AG04450 (cell line): ENCODE measurements at regions of chr1 and their contacts with region 1.

Region 1: DNA sequence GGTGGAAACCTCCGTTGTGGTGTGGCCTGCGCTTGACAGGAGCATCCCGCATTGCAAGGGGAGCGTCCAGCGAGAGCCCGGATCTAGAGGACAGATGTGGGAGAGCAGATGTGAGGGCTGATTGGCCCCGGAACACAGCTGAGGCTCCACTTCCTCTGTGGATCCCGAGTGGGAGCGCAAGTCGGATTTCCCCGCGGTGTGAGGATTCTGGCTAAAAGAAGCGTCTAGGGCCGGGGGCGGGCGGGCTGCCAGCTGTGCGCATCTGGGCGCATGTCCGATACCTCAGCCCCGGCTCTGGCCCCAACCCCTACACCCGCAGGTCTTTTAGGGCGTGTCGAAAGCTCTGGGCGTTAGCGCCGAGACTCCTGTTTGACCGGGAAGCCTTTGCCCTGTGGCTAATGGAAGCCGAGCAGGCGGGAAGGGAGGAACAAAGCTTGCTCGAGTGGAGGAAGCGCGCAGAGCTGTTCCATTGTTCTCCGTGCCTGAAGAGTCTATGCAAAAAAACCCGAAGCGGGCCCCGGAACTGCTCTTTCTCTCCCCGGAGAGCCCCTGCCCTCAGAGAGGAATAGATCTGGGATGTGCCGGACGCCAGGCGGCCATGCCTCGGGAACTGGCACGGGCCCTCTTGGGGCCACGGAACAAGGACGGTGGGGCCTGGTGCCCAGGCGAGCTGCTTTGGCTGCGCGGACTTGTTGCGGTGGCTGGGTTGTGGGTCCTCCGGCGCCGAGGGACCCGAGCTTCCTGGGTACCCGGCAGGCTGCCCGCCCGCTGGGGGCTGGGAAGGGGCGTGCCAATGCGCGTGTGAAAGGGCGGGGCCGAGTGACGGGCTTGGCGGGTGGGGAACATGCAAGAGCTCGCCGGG is 111.1 kb downstream of the NAV1 start:
- DNase-seq: no peak
- H3K4me3 ChIP-seq: peak overlapping the region; percentile 91
- H3K27ac ChIP-seq: peak overlapping the region; percentile 73
- H3K27me3 ChIP-seq: no peaks in the 10 kb centered on the region
- CTCF ChIP-seq: peak; percentile 21; the same call in 1 of the 2 replicates

Region 2: DNA sequence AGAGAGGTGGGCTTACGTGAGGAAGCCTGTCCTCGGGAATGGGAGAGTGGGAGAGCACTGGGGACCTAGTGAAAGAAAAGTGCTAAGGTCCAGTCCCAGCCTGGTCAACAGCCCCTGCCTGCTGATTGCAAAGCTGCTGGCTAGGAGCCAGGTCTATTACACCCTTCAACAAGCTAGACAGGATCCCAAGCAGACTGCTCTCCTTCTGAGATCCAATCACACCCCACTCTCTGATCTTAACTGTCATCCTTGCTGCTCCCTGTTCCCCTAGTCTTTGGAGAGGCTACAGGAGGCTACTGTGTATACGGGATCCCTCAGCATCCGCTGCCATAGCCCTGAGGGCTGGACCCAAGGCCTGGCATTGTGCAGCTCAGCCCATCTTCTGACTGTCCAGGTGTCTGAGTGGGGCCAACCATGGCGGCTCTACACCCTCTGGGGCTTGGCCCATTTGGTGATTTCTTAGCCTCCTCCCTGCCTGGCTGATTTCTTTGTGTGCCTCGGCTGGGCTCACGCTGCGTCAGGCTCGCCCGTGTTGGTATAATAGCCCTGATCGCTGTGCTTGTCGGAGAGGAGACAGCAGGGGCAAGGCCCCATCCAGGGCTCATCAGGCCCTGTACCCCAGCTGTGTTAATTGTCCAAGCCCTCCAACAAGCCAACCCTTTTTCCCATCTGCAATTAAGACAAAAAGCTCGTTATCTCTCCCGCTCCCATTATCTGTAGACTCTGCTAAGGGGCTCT is 67.1 kb before region 1 on chr1:
- CTCF ChIA-PET with region 1: interaction called, 3 read pairs
- POLR2A ChIA-PET with region 1: interaction called, 10 read pairs
- DNase-seq: no peak
- H3K4me3 ChIP-seq: no peak overlapping the region
- H3K27ac ChIP-seq: peak overlapping the region; percentile 70
- H3K27me3 ChIP-seq: no peaks in the 10 kb centered on the region
- CTCF ChIP-seq: no peak

Region 3: GRCh38 chr1:201595381-201595780 is 54.6 kb before region 1 on chr1:
- CTCF ChIA-PET with region 1: no interaction called
- POLR2A ChIA-PET with region 1: no interaction called
- DNase-seq: no peak
- H3K4me3 ChIP-seq: no peak overlapping the region
- H3K27ac ChIP-seq: no peak overlapping the region
- H3K27me3 ChIP-seq: no peaks in the 10 kb centered on the region
- CTCF ChIP-seq: no peak